ENCODE measurements at regions of chr10 and their contacts with region 1.

Region 1: GRCh38 chr10:63707254-63707910 is 186.2 kb downstream of the REEP3 start:
- DNase-seq: peak; percentile 99
- H3K4me3 ChIP-seq: no peak overlapping the region
- H3K27ac ChIP-seq: peak overlapping the region; percentile 74
- H3K4me1 ChIP-seq: peaks cover 32% of the 10 kb centered on the region
- H3K27me3 ChIP-seq: no peaks in the 10 kb centered on the region
- CTCF ChIP-seq: no peak
- POLR2A ChIP-seq: no peak

Region 2: DNA sequence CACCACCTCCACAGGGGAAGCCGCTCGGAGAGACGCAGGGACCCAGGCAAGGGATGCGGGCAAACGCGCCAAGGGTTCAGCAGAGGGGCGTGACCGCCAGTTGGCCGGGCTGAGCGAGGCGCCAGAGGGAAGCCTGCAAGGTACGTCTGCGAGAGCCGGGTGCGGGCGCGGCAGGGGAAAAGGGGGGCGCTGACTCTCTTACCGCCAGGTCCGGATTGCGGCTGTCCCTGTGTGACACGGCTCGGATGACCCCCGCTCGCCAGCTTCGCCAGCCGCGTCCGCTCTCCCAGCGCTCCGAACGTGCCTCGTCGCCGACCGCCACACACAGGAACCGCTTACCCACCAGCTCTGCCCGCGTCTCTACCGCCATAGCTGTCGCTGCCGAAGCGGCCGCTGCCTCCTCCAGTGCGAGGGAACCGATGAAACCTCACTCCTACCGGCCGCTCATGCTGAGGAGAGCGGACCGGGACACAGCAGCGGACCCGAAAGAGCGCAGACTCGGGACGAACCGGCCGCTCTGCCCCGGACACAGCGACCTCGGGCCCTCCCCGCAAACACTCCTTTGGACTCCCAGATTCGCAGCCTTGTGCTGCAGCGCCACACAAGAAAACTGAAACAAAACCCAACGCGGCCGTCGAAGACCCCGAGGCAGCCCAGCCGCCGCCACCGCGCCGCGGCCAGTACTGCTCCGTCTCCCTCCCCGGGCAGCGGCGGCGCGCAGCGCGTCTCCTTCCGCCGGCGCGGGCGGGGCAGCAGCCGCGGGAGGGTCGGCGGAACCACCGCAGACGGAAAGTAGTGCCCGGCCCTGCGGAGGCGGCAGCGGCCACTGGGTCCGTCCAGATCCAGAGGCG is 241.9 kb before region 1 on chr10 and contains the start of gene JMJD1C:
- CTCF ChIA-PET with region 1: no interaction called
- POLR2A ChIA-PET with region 1: no interaction called
- dilution Hi-C with region 1: no loop called
- intact Hi-C with region 1: loop called (anchors 2 kb)
- DNase-seq: peak; percentile 80
- H3K4me3 ChIP-seq: peak within 1 kb of the TSS; percentile 55 to 98 (median 83)
- H3K27ac ChIP-seq: peak within 1 kb of the TSS; percentile 82
- H3K4me1 ChIP-seq: peaks cover 5% of the 10 kb centered on the region
- H3K27me3 ChIP-seq: no peaks in the 10 kb centered on the region
- CTCF ChIP-seq: peak in 1 of 2 donors; percentile 12
- POLR2A ChIP-seq: peak; percentile 84
- total RNA-seq, gene JMJD1C: 93.3 and 97.1 TPM in 2 replicates

Region 3: DNA sequence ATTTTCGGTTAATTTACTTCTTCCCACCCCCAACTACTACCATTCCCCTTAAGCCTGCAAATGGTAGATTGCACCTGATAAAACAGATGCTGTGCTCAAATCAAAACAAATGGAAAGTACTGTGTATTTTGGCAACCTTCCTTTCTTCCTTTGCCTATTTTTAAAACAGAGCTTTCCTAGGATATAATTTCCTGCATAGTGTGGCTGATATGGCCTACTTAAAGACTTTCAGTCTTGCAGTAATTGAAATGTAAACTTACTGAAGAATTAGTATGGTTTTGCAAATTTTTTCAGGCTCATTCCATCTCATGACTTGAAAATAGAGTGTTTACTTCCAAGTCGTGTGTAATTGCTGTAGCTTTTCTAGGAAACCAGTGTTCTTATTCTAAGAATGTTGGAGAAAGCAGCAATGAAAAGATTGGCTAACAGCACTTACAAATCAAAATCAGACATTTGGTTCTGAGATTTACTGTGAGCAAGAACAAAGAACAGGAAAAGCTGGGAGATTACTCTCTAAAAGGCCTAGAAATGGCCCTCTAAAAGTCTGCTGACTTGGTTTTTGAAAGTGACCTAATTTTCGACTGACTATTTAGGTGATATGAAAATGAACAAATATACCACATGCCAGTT is 134.2 kb before region 1 on chr10:
- CTCF ChIA-PET with region 1: no interaction called
- POLR2A ChIA-PET with region 1: no interaction called
- dilution Hi-C with region 1: no loop called
- intact Hi-C with region 1: loop called (anchors 2 kb)
- DNase-seq: peak; percentile 95
- H3K4me3 ChIP-seq: peak overlapping the region in 1 of 3 experiments; percentile 16
- H3K27ac ChIP-seq: peak overlapping the region; percentile 68
- H3K4me1 ChIP-seq: peaks cover 33% of the 10 kb centered on the region
- H3K27me3 ChIP-seq: no peaks in the 10 kb centered on the region
- CTCF ChIP-seq: no peak
- POLR2A ChIP-seq: no peak

Region 4: GRCh38 chr10:63666836-63667383 is 40.5 kb before region 1 on chr10:
- CTCF ChIA-PET with region 1: interaction called, 6 read pairs
- POLR2A ChIA-PET with region 1: no interaction called
- dilution Hi-C with region 1: no loop called
- intact Hi-C with region 1: loop called (anchors 1 kb)
- DNase-seq: peak; percentile 92
- H3K4me3 ChIP-seq: no peak overlapping the region
- H3K27ac ChIP-seq: peak overlapping the region; percentile 40
- H3K4me1 ChIP-seq: peaks cover 34% of the 10 kb centered on the region
- H3K27me3 ChIP-seq: no peaks in the 10 kb centered on the region
- CTCF ChIP-seq: no peak
- POLR2A ChIP-seq: no peak

Measured in endothelial cell of umbilical vein (primary cell).